A673 (cell line): ENCODE measurements at regions of chr14 and their contacts with region 1.

Region 1: GRCh38 chr14:93337143-93337753 is 4.4 kb upstream of the BTBD7 start:
- DNase-seq: no peak
- H3K4me3 ChIP-seq: no peak overlapping the region
- H3K27ac ChIP-seq: no peak overlapping the region
- H3K4me1 ChIP-seq: peaks cover 7% of the 10 kb centered on the region
- H3K27me3 ChIP-seq: no peaks in the 10 kb centered on the region
- CTCF ChIP-seq: no peak

Region 2: GRCh38 chr14:94089479-94089878 is 752.2 kb after region 1 on chr14:
- CTCF ChIA-PET with region 1: no interaction called
- POLR2A ChIA-PET with region 1: interaction called, 13 read pairs
- intact Hi-C with region 1: no loop called
- DNase-seq: no peak
- H3K4me3 ChIP-seq: no peak overlapping the region
- H3K27ac ChIP-seq: no peak overlapping the region
- H3K4me1 ChIP-seq: no peaks in the 10 kb centered on the region
- H3K27me3 ChIP-seq: no peaks in the 10 kb centered on the region
- CTCF ChIP-seq: no peak